Activated CD4-positive, alpha-beta memory T cell treated with anti-CD3 and anti-CD28 coated beads, Interleukin-2, amount 10 ng/mL, durations not matched to agents 7 days and 5 days (primary cell): ENCODE measurements at regions of chr2 and their contacts with region 1.

Region 1: DNA sequence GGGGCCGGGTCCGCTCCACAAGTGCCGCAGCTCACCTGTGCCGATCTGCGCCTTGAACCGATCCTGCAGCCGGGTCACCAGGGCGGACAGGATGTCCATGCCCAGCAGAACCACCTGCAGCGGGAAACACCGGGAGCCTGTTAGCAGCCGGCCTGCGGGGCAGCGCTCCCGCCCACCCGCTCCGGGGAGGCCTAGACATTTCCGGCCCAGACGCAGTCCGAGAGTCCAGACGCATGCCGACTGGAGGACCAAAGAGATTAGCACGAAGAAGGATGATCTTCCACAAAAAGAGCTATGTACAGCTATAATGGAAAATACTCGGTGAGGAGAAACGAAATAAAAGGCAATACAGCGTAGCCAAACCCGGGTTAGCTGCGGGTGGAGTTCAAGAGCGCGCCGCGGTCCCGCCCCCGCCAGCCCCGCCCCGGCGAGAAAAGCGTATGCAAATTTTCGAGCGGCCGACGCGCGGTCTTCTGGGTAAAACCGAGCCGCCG is 421 bp upstream of the RNU4ATAC start:
- DNase-seq: peak; percentile 88
- H3K4me3 Mint-ChIP-seq: peak overlapping the region; percentile 88
- H3K27ac Mint-ChIP-seq: peak overlapping the region; percentile 96
- H3K4me1 Mint-ChIP-seq: peaks cover 63% of the 10 kb centered on the region
- H3K27me3 Mint-ChIP-seq: no peaks in the 10 kb centered on the region

Region 2: DNA sequence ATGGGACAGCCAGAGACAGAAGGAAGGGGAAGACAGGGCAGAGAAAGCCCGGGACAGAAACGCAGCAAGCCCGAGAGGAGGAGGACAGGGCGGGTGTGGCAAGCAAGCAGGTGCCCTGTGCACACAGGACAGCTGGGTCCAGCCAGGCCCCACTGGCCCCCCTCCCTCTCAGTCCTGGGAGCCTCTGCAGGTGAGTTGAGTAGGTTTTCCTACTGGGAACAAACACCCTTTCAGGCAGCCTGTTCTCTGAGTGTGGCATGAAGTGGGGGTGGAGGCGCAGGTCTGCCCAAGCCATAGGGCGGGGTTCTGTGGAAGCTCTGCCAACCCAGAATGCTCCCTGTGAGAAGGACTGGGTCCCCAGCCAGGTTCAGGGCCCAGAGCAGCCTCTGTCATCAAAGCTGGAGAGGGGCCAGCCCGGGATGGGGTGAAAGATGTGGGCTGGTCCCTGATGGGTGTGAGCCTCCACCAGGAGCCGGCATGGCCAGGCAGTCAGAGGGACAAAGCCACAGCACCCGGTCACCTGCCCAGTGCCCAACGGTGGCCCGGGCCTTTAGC is 374.7 kb before region 1 on chr2:
- CTCF ChIA-PET with region 1: no interaction called
- POLR2A ChIA-PET with region 1: no interaction called
- DNase-seq: no peak
- H3K4me3 Mint-ChIP-seq: no peak overlapping the region
- H3K27ac Mint-ChIP-seq: no peak overlapping the region
- H3K4me1 Mint-ChIP-seq: no peaks in the 10 kb centered on the region
- H3K27me3 Mint-ChIP-seq: no peaks in the 10 kb centered on the region

Region 3: DNA sequence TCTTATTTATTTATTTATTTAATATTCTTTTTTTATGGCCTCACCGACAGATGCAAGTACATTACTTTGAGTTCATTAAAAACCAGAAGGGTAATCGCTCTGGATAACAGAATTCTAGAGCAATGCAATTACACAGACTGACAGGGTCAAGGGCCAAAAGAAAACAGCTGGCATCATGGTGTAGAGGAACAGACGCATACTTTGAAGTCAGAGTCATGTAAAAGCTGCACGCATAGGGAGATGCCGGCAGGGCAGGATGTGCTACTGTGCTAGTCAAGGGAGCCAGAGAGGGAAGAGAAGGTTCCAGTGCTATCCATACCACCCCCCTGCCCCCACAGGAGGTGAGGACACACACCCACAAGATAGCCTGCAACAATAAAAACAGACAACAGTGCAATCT is 130.1 kb before region 1 on chr2:
- CTCF ChIA-PET with region 1: interaction called, 10 read pairs
- POLR2A ChIA-PET with region 1: interaction called, 9 read pairs
- DNase-seq: no peak
- H3K4me3 Mint-ChIP-seq: no peak overlapping the region
- H3K27ac Mint-ChIP-seq: no peak overlapping the region
- H3K4me1 Mint-ChIP-seq: peaks cover 2% of the 10 kb centered on the region
- H3K27me3 Mint-ChIP-seq: no peaks in the 10 kb centered on the region

Region 4: GRCh38 chr2:121547646-121548045 is 17.4 kb after region 1 on chr2:
- CTCF ChIA-PET with region 1: interaction called, 7 read pairs
- POLR2A ChIA-PET with region 1: interaction called, 22 read pairs
- DNase-seq: no peak
- H3K4me3 Mint-ChIP-seq: no peak overlapping the region
- H3K27ac Mint-ChIP-seq: no peak overlapping the region
- H3K4me1 Mint-ChIP-seq: peaks cover 39% of the 10 kb centered on the region
- H3K27me3 Mint-ChIP-seq: no peaks in the 10 kb centered on the region

Region 5: DNA sequence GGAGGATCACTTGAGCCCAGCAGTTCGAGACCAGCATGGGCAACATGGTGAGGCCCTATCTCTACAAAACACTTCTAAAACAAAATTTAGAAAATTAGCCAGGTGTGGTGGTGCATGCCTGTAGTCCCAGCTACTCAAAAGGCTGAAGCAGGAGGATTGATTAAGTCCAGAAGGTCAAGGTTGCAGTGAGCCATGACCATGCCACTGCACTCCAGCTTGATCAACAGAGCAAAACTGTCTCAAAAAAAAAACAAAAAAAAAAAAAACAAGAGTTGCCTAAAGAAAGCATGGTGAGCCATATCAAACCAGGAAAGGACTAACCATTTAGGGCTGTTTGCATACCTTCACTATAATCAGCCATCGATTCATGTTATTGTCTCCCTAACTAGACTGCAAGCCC is 114.5 kb after region 1 on chr2:
- CTCF ChIA-PET with region 1: interaction called, 28 read pairs
- POLR2A ChIA-PET with region 1: interaction called, 224 read pairs
- DNase-seq: no peak
- H3K4me3 Mint-ChIP-seq: no peak overlapping the region
- H3K27ac Mint-ChIP-seq: no peak overlapping the region
- H3K4me1 Mint-ChIP-seq: peaks cover 38% of the 10 kb centered on the region
- H3K27me3 Mint-ChIP-seq: no peaks in the 10 kb centered on the region

Region 6: DNA sequence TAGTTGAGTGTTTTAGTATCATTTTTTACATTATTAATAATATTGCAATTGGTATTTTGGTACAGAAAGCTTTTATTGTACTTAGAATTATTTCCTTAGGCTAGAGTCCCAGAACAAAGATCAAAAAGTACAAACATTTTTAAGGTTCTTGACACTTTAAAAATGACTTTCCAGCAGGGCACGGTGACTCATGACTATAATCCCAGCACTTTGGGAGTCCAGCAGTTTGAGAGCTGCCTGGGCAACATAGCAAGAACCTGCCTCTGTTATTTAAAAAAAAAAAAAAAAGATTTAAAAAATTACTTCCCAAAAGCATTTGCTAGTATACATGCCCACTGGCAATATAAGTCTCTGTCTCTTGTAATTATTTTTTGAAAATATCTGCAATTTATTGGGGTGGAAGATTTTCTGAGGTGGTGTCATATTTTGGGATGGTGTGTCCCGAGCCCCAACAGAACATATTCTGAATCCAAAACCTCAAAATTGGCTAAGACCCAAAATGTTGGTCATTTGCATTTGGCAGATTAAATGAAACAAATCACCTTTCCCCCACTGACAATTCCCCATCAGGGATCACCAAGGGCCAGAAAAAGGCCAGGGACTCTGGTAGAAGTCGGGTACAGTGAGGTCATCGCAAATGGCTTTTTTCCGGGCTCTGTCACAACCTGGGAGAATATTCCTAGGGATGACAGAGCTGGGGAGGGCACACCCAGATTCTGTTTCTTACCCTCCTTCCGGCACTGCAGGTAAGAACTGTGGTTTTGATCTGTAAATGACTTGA is 164.3 kb after region 1 on chr2:
- CTCF ChIA-PET with region 1: interaction called, 22 read pairs
- POLR2A ChIA-PET with region 1: interaction called, 165 read pairs
- DNase-seq: no peak
- H3K4me3 Mint-ChIP-seq: no peak overlapping the region
- H3K27ac Mint-ChIP-seq: no peak overlapping the region
- H3K4me1 Mint-ChIP-seq: peaks cover 21% of the 10 kb centered on the region
- H3K27me3 Mint-ChIP-seq: no peaks in the 10 kb centered on the region

Region 7: DNA sequence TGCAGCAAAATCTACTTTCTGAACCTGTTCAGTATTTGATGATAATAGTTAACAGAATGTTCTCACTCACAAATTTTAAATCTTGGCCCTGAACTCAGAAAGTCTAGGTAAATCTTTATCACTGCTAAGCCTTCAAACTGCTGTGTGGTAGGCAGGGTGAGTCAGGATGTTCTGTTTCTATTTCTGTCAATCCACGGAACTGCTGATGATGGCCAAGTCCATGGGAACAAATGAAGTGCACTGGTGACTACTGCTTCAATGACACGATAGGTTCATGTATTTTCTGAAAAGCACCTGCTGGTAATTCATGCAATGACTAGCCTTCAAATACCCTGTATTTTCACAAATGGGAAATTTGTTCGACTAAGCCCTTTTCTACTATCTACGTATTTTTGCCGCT is 192.2 kb after region 1 on chr2:
- CTCF ChIA-PET with region 1: interaction called, 42 read pairs
- POLR2A ChIA-PET with region 1: interaction called, 69 read pairs
- DNase-seq: peak; percentile 52
- H3K4me3 Mint-ChIP-seq: peak overlapping the region; percentile 25
- H3K27ac Mint-ChIP-seq: peak overlapping the region; percentile 92
- H3K4me1 Mint-ChIP-seq: peaks cover 38% of the 10 kb centered on the region
- H3K27me3 Mint-ChIP-seq: no peaks in the 10 kb centered on the region

Region 8: GRCh38 chr2:121736462-121737341 is 206.4 kb after region 1 on chr2 and contains the start of gene NIFK:
- CTCF ChIA-PET with region 1: interaction called, 5 read pairs
- POLR2A ChIA-PET with region 1: interaction called, 87 read pairs
- DNase-seq: peak; percentile 100
- H3K4me3 Mint-ChIP-seq: peak within 1 kb of the TSS; percentile 89
- H3K27ac Mint-ChIP-seq: peak within 1 kb of the TSS; percentile 88
- H3K4me1 Mint-ChIP-seq: peaks cover 44% of the 10 kb centered on the region
- H3K27me3 Mint-ChIP-seq: peaks cover 2% of the 10 kb centered on the region
- total RNA-seq, gene NIFK: 63.4 to 67.2 TPM

Region 9: DNA sequence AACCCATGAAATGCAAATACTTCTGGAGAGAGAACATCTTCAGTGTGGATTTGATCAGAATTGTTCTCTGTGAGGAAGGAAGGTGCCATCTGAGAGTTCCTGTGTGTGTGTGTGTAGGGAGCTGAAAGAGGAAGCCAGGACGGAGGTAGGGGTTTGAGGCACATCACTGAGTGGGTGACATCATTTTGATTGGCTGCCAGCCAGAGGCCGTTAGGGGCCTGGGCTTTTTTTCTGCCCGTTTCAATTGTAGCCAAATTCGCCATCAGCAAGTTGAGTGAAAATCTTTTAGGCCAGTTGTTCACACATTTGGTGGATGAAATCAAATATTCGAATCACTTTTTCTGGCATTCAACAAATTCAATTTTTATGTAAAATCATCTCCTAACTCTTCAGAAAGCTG is 274.1 kb after region 1 on chr2:
- CTCF ChIA-PET with region 1: no interaction called
- POLR2A ChIA-PET with region 1: no interaction called
- DNase-seq: no peak
- H3K4me3 Mint-ChIP-seq: no peak overlapping the region
- H3K27ac Mint-ChIP-seq: no peak overlapping the region
- H3K4me1 Mint-ChIP-seq: no peaks in the 10 kb centered on the region
- H3K27me3 Mint-ChIP-seq: peaks cover 37% of the 10 kb centered on the region